ENCODE measurements at regions of chr4 and their contacts with region 1.

Region 1: DNA sequence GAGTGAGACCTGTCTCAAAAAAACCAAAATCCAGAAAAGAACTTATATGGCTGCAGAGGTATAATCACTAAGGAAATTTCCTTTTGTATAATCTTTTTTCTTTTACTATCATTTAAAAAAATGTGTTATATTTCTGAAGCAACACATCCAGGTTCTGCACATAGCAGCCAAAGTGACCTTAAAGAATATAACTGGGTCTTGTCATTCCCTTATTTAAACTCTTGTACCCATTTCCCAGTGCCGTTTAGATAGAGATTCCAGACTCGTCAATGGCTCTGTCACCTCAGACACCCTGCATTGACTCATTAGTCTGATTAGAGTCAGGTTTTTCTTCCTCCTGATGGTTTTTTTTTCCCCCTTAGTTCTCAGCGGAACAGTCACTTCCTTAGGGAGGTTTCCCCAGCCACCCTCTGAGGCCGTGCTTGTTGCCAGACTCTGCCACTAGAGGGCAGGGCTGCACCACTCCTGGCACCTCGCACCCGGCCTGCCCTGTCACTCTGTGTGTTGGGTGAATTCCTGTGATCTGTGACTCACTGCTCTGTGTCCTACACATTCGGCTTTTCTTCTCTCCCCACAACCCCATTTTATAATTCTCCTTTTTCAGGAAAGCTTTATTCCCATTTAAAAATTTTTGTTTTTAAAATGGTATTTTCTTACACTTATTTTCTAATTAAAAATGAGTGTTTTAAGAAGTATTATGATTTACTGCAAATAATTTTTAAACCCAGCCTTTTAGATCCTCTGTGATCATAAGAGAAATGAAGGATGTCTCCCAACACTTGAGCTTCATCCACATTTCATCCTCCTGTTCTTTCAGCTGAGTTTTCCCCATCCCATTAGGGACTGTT is 32.1 kb downstream of the HTT start:
- DNase-seq: peak; percentile 95
- ATAC-seq: peak; percentile 100
- H3K4me3 Mint-ChIP-seq: no peak overlapping the region
- H3K27ac Mint-ChIP-seq: peak overlapping the region; percentile 25
- H3K4me1 Mint-ChIP-seq: peaks cover 18% of the 10 kb centered on the region
- H3K27me3 Mint-ChIP-seq: no peaks in the 10 kb centered on the region

Region 2: DNA sequence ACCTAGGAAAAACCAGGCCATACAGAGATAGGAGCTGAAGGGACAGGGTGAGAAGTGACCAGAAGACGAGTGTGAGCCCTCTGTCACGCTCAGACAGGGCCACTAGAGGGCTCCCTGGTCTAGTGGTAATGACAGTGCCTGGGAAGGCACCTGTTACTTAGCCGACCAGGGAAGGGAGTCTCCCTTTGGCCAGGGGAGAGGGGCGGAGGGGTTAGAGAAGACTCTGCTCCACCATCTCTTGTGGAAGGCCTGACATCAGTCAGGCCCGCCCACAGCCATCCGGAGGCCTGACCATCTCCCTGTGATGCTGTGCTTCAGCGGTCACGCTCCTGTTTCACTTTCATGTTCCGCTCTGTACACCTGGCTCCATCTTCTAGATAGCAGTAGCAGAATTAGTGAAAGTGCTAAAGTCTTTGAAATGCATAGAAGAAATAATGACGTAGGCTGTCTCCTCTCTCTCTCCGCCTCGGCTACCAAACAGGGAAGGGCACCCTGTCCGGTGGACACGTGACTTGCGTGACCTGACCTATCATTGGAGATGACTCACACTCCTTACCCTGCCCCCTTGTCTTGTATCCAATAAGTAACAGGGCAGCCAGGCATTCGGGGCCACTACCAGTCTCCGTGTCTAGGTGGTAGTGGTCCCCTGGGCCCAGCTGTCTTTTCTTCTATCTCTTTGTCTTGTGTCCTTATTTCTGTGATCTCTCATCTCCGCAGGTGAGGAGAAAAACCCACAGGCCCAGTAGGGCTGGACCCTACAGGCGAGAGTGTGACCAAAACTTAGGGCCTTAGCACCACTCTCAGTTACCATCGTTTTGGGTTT is 58.9 kb before region 1 on chr4:
- CTCF ChIA-PET with region 1: no interaction called
- POLR2A ChIA-PET with region 1: no interaction called
- intact Hi-C with region 1: loop called in 1 of 2 experiments (anchors 1 kb)
- DNase-seq: peak; percentile 89
- ATAC-seq: peak; percentile 98
- H3K4me3 Mint-ChIP-seq: peak overlapping the region; percentile 51
- H3K27ac Mint-ChIP-seq: peak overlapping the region; percentile 69
- H3K4me1 Mint-ChIP-seq: peaks cover 31% of the 10 kb centered on the region
- H3K27me3 Mint-ChIP-seq: no peaks in the 10 kb centered on the region

Region 3: GRCh38 chr4:3085948-3086655 is 20.5 kb before region 1 on chr4:
- CTCF ChIA-PET with region 1: interaction called, 12 read pairs
- POLR2A ChIA-PET with region 1: no interaction called
- intact Hi-C with region 1: loop called in 1 of 2 experiments (anchors 1 kb)
- DNase-seq: no peak
- ATAC-seq: peak; percentile 50
- H3K4me3 Mint-ChIP-seq: peak overlapping the region; percentile 20
- H3K27ac Mint-ChIP-seq: peak overlapping the region; percentile 96
- H3K4me1 Mint-ChIP-seq: peaks cover 68% of the 10 kb centered on the region
- H3K27me3 Mint-ChIP-seq: no peaks in the 10 kb centered on the region

Region 4: DNA sequence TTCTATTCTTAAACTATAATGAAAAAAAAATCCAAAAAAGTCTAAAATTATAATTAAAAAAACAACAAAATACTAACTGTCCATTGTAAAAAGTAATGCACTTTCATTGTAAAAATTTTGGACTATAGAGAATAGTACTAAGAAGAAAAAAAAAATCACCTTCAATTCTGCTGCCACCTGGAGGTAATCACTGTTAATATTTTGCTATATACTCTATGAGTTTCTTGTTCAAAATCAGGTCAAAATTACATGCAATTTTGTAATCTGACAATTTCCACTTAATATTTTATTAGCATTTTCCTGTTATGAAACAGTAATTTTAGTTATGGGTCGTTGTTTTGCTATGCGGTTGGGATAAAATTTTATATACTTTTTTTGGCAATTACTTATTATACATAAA is 29.9 kb after region 1 on chr4:
- CTCF ChIA-PET with region 1: interaction called, 18 read pairs
- POLR2A ChIA-PET with region 1: no interaction called
- intact Hi-C with region 1: loop called (anchors 1 kb)
- DNase-seq: no peak
- ATAC-seq: no peak
- H3K4me3 Mint-ChIP-seq: no peak overlapping the region
- H3K27ac Mint-ChIP-seq: no peak overlapping the region
- H3K4me1 Mint-ChIP-seq: no peaks in the 10 kb centered on the region
- H3K27me3 Mint-ChIP-seq: no peaks in the 10 kb centered on the region

Region 5: GRCh38 chr4:3269991-3270611 is 163.5 kb after region 1 on chr4:
- CTCF ChIA-PET with region 1: no interaction called
- POLR2A ChIA-PET with region 1: no interaction called
- intact Hi-C with region 1: no loop called
- DNase-seq: no peak
- ATAC-seq: no peak
- H3K4me3 Mint-ChIP-seq: no peak overlapping the region
- H3K27ac Mint-ChIP-seq: no peak overlapping the region
- H3K4me1 Mint-ChIP-seq: no peaks in the 10 kb centered on the region
- H3K27me3 Mint-ChIP-seq: no peaks in the 10 kb centered on the region

Region 6: DNA sequence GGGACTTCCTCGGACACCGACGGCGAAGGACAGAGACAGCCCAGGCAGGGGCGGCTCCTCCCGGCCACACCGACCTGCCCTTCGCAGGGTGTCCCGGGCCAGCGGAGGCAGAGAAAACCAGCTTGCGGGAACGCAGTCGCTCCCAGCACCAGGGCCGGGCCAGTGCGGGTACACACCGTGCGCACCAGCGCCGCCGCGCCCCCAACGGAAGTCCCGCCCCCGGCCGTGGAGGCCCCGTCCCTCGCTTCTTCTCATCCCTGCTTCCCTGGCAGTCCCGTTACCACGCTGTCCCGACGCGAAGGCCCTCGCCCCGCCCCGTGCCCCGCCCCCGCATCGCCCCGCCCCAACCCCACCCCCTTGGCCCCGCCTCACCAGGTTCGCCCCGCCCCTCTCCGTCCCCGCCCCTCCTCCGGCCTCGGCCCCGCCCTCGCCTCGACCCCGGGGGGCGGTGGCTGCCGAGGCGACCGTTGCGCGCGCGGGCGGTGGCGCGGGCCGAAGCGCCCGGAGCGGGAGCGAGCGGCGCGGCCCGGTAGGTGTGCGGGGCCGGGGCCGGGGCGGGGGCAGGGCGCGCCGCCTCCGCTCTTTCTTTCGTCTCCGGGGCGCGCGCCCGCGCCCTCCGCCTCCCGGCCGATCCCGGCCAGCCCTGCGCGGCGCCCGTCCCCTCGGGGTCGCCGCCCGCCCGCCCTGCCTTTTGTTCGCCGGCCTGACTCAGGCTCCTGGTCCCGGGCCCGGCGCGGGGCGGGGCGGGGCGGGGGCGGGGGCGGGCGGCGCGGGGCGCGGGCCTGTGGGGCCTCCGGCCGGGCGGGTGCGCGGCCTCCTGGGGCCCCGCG is 186.2 kb after region 1 on chr4 and contains the start of gene RGS12:
- CTCF ChIA-PET with region 1: interaction called, 3 read pairs
- POLR2A ChIA-PET with region 1: no interaction called
- intact Hi-C with region 1: loop called in 1 of 2 experiments (anchors 1 kb)
- DNase-seq: peak; percentile 93
- ATAC-seq: peak; percentile 95
- H3K4me3 Mint-ChIP-seq: peak within 1 kb of the TSS; percentile 81
- H3K27ac Mint-ChIP-seq: peak within 1 kb of the TSS; percentile 64
- H3K4me1 Mint-ChIP-seq: peaks cover 11% of the 10 kb centered on the region
- H3K27me3 Mint-ChIP-seq: peaks cover 4% of the 10 kb centered on the region
- total RNA-seq, gene RGS12: 8.0 to 9.4 TPM

Region 7: GRCh38 chr4:3442959-3443749 is 336.6 kb after region 1 on chr4:
- CTCF ChIA-PET with region 1: interaction called, 3 read pairs
- POLR2A ChIA-PET with region 1: no interaction called
- intact Hi-C with region 1: loop called (anchors 1 to 2 kb)
- DNase-seq: peak; percentile 83
- ATAC-seq: peak; percentile 89
- H3K4me3 Mint-ChIP-seq: no peak overlapping the region
- H3K27ac Mint-ChIP-seq: no peak overlapping the region
- H3K4me1 Mint-ChIP-seq: no peaks in the 10 kb centered on the region
- H3K27me3 Mint-ChIP-seq: no peaks in the 10 kb centered on the region

Region 8: GRCh38 chr4:3531879-3532713 is 425.5 kb after region 1 on chr4 and contains the start of gene LRPAP1:
- CTCF ChIA-PET with region 1: no interaction called
- POLR2A ChIA-PET with region 1: no interaction called
- intact Hi-C with region 1: loop called in 1 of 2 experiments (anchors 1 kb)
- DNase-seq: peak; percentile 92
- ATAC-seq: peak; percentile 94
- H3K4me3 Mint-ChIP-seq: peak within 1 kb of the TSS; percentile 100
- H3K27ac Mint-ChIP-seq: peak within 1 kb of the TSS; percentile 97
- H3K4me1 Mint-ChIP-seq: peaks cover 20% of the 10 kb centered on the region
- H3K27me3 Mint-ChIP-seq: no peaks in the 10 kb centered on the region
- total RNA-seq, gene LRPAP1: 50.8 to 53.4 TPM

Measured in activated CD4-positive, alpha-beta T cell treated with anti-CD3 and anti-CD28 coated beads for 36 hours (primary cell).